ENCODE measurements at regions of chr18 and their contacts with region 1.

Region 1: DNA sequence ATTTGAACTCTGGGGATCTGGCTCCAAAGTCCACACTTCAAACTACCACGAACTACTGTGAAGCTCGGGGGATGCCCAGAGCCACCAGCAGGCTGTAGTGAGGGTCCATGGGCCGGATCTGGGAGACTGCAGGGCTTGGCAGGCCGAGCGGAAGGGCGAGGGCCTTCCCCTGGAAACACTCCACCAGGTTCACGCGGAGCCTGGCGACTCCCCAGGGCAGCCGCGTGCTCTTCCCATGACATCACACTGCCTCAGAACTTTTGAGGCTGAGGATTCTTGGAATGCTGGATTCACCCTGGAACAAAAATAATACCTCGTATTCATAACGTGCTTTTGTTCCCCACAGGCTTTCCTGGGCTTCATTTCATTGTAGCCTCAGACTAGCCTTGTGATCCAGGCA is 201.0 kb downstream of the SMAD7 start:
- DNase-seq: peak; percentile 94

Region 2: DNA sequence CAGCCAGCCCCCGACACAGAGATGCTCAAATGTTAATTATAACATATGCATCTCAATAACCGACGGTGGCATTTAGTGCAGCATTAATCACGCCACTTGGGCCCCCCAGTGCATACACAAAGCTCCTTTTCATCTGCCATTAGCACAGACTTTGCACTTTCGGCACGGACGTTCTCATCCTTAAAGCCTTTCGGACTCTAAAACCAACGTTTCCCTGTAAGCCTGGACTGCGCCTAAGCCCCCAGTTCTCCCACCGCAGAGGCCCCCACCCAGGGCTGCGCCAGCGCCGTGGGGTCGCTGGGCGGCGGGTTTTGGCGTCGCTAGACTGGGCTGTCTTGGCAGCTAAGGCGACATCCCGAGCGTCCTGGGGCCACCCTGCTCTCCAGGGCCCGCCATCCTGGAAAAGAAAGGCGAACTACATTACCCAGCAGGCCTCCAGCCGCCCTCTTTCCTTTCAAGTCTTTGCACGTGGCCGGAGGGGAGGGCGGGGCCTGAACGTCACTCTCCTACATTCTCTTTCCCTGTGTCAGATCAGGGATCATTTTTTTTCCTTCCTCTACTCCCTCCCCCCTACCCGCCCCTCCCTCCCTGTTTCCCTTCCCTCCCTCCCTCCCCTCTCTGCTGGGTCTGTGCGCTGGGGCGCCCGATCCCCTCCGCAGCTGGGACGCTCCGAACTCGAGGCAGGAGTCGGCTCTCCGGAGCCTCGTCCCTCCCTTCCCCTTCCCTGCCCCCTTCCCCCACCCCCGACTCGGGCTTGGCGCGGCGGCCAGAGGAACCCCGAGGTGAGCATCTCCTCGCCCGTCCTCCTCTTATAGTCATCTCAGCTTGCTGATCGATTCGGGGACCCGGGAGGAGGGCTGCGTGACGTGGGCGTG is 211.0 kb before region 1 on chr18 and contains the start of gene CTIF:
- intact Hi-C with region 1: no loop called
- DNase-seq: peak; percentile 98
- total RNA-seq, gene CTIF: 87.8 to 116 TPM

Region 3: DNA sequence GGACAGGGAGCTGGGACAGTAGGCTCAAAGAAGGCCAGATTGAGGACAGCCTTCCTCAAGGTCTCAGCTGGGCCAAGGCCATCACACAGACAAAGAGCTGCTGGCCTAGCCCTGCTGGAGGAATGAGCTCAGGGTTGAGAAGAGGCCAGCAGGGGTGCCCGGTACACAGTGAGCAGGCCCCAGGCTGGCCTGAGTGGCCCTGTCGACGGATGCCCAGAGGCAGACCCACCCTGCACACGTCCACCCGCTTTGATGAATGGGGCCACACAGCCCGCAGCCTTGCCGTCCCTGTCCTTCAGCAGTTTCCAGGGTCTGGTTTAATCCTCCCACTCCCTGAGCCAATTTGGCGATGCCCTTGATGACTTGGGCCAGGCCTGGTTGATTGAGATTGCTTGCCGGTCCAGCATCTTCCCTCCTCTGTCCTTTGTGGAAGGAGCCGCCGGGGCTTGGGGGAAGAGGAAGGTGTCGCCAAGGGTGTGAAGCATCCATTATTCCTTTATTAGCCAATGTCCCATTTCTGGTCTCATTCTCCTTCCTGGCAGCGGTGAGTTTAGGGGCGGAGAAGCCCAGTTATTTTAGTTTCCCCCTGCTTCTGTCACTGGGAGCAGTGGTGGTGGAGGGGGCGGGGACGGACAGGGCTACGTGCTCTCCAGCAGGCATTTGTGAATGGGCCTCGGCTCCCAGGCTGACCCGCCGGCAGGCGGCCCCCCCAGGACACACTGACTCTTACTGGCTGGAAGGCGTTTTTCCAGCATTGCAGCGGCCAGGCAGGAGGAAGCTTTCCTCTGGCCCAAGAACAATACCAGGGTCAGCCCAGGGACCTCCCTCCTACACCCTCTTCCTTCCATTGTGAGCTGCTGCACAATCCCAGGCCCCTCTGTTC is 69.2 kb before region 1 on chr18:
- intact Hi-C with region 1: loop called in 1 of 2 experiments (anchors 10 kb)
- DNase-seq: peak; percentile 97

Region 4: DNA sequence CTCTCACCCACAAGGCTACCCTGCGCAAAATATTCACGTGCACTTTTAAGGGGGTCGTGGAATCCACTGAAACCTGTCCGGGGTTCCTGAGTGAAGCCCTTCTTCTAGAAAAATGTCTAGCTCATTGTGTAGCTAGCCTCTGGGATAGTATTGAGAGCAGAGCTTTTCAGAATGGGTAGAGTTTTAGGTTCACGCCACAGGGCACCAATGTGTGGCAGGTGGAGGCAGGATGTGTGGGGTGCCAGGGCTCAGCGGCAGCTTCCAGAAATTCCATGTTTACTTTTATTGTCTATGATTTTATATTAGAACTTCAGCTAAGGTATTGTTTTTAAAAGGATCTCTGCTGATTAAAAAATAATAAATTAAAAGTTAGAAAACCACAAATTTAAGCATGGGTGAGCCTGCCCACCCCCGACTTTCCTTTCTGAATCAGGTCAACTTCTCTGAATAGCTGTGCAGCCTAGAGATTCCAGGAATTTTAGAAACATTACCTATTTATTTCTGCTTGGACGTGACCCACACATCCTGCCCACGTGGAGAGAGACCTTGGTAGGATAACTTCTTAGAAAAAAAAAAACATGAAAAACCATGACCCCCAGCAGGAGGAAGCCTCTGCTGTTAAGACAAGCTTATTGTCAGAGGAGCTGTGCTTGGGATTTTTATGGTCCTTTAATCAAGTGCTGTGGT is 47.3 kb before region 1 on chr18:
- intact Hi-C with region 1: no loop called
- DNase-seq: no peak

Region 5: DNA sequence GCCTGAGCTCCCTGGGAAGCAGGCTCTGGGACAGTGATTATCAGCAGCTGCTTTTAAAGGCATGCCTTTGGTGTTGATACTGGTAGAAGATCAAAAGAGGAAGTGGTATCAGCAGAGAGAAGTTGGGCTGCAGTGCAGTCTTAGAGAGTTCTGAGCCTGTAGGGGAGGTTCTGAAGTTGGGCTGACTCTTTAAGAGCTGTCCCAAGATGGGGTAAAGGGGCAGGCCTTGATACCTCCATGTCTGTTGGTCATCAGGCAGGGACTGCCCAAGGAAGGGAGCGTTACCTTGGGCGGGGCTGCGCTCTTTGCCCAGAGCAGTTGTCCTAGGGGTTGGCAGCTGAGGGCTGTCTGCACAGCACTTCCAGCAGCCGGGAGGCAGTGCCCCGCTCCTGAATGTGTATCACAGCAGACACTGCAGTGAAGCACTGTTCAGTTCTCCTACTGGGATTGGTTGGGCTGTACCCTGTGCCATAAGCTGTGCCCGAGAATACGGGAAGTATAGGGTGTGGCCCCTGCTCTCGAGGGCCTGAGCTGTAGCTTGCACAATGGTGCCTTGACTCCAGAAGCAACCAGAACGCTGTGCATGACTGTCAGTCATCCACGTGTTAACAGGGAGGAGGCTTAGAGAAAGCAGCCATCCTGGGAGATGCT is 33.9 kb before region 1 on chr18:
- intact Hi-C with region 1: loop called (anchors 1 to 5 kb)
- DNase-seq: peak; percentile 87

Region 6: DNA sequence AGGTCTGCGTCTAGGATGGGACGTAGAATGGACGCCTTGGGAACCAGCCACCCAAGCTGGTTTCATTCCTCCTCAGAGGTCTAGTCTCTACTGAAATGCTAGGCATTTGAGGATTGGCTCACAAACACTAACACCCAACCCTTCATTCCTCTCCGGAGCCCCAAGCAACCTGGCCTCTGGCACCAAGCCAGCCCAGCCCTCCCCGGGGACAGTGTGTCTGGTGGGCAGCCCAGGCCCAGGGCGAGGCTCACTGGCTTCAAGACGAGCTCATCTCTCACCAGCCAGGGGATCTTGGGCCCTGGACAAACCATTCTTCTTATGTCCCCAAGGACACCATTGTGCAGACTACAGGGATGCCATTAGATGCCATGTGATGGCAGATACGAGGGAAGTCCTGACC is 28.5 kb before region 1 on chr18:
- intact Hi-C with region 1: loop called (anchors 1 to 5 kb)
- DNase-seq: peak; percentile 85